Heart left ventricle (tissue), 16 donors: ENCODE measurements at regions of chr6 and their contacts with region 1.

Region 1: GRCh38 chr6:159174263-159174969 is 5.2 kb downstream of the FNDC1 start:
- DNase-seq: peak; percentile 61 to 85 (median 73)
- ATAC-seq: peak; percentile 73 to 90 (median 84)
- H3K4me3 ChIP-seq: peak overlapping the region in 4 of 12 donors; percentile 10 to 22 (median 11)
- H3K27ac ChIP-seq: no peak overlapping the region
- H3K4me1 ChIP-seq: peaks cover 0 to 21% (median 11%) of the 10 kb centered on the region in 12 donors
- H3K27me3 ChIP-seq: peaks cover 10 to 64% (median 34%) of the 10 kb centered on the region in 9 donors
- CTCF ChIP-seq: peak; percentile 76 to 97 (median 90)
- POLR2A ChIP-seq: no peak

Region 2: GRCh38 chr6:159463119-159463829 is 288.9 kb after region 1 on chr6:
- intact Hi-C with region 1: loop called in 4 of 10 experiments (anchors 5 to 10 kb)
- DNase-seq: no peak
- ATAC-seq: no peak
- H3K4me3 ChIP-seq: no peak overlapping the region
- H3K27ac ChIP-seq: no peak overlapping the region
- H3K4me1 ChIP-seq: no peaks in the 10 kb centered on the region
- H3K27me3 ChIP-seq: no peaks in the 10 kb centered on the region
- CTCF ChIP-seq: peak in 7 of 12 donors; percentile 9 to 43 (median 30)
- POLR2A ChIP-seq: no peak

Region 3: GRCh38 chr6:159646733-159647132 is 472.3 kb after region 1 on chr6:
- intact Hi-C with region 1: loop called in 1 of 10 experiments (anchors 5 kb)
- DNase-seq: no peak
- ATAC-seq: no peak
- H3K4me3 ChIP-seq: no peak overlapping the region
- H3K27ac ChIP-seq: no peak overlapping the region
- H3K4me1 ChIP-seq: peaks cover 0 to 9% (median 0%) of the 10 kb centered on the region in 12 donors
- H3K27me3 ChIP-seq: no peaks in the 10 kb centered on the region
- CTCF ChIP-seq: no peak
- POLR2A ChIP-seq: no peak

Region 4: GRCh38 chr6:159654483-159655098 is 480.2 kb after region 1 on chr6:
- intact Hi-C with region 1: loop called (anchors 2 to 5 kb)
- DNase-seq: no peak
- ATAC-seq: peak in 1 of 4 donors; percentile 51
- H3K4me3 ChIP-seq: no peak overlapping the region
- H3K27ac ChIP-seq: no peak overlapping the region
- H3K4me1 ChIP-seq: peaks cover 0 to 5% (median 0%) of the 10 kb centered on the region in 12 donors
- H3K27me3 ChIP-seq: no peaks in the 10 kb centered on the region
- CTCF ChIP-seq: peak; percentile 44 to 73 (median 58)
- POLR2A ChIP-seq: no peak

Region 5: DNA sequence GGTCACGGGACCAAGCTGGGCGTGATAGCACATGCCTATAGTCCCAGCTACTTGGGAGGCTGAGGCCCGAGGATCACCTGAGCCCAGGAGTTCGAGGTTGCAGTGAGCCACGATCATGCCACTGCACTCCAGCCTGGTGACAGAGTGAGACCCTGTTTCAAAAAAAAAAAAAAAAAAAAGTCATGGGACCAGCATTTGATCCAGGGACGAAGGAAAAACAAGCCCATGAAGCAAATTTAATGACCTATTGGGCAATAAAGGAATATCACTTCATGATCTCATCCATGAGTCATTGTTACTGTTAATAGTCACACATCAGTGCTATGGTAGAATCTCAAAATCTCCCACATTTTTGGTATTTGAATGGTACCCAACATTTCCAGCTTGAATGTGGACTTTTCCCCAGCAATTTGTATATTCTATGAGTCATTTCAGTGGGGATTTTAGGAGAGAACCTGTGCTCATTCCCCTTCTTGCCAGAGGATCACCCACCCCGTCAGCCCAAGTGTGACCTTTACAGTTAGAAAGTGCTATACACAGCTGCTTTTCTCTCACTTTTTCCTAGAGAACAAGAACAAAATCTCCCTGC is 527.1 kb after region 1 on chr6:
- intact Hi-C with region 1: no loop called
- DNase-seq: peak in 1 of 5 donors; percentile 49
- ATAC-seq: peak; percentile 56 to 93 (median 75)
- H3K4me3 ChIP-seq: no peak overlapping the region
- H3K27ac ChIP-seq: peak overlapping the region in 9 of 12 donors; percentile 17 to 80 (median 41)
- H3K4me1 ChIP-seq: peaks cover 0 to 18% (median 4%) of the 10 kb centered on the region in 12 donors
- H3K27me3 ChIP-seq: no peaks in the 10 kb centered on the region
- CTCF ChIP-seq: no peak
- POLR2A ChIP-seq: no peak

Region 6: GRCh38 chr6:159935065-159935464 is 760.6 kb after region 1 on chr6:
- intact Hi-C with region 1: loop called in 1 of 10 experiments (anchors 5 kb)
- DNase-seq: no peak
- ATAC-seq: peak in 3 of 4 donors; percentile 39 to 74 (median 43)
- H3K4me3 ChIP-seq: no peak overlapping the region
- H3K27ac ChIP-seq: no peak overlapping the region
- H3K4me1 ChIP-seq: peaks cover 0 to 16% (median 5%) of the 10 kb centered on the region in 12 donors
- H3K27me3 ChIP-seq: no peaks in the 10 kb centered on the region
- CTCF ChIP-seq: no peak
- POLR2A ChIP-seq: no peak